Left cardiac atrium (tissue), 4 donors: ENCODE measurements at regions of chr2 and their contacts with region 1.

Region 1: DNA sequence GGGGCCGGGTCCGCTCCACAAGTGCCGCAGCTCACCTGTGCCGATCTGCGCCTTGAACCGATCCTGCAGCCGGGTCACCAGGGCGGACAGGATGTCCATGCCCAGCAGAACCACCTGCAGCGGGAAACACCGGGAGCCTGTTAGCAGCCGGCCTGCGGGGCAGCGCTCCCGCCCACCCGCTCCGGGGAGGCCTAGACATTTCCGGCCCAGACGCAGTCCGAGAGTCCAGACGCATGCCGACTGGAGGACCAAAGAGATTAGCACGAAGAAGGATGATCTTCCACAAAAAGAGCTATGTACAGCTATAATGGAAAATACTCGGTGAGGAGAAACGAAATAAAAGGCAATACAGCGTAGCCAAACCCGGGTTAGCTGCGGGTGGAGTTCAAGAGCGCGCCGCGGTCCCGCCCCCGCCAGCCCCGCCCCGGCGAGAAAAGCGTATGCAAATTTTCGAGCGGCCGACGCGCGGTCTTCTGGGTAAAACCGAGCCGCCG is 421 bp upstream of the RNU4ATAC start:
- DNase-seq: peak; percentile 87
- ATAC-seq: peak; percentile 81 to 85

Region 2: DNA sequence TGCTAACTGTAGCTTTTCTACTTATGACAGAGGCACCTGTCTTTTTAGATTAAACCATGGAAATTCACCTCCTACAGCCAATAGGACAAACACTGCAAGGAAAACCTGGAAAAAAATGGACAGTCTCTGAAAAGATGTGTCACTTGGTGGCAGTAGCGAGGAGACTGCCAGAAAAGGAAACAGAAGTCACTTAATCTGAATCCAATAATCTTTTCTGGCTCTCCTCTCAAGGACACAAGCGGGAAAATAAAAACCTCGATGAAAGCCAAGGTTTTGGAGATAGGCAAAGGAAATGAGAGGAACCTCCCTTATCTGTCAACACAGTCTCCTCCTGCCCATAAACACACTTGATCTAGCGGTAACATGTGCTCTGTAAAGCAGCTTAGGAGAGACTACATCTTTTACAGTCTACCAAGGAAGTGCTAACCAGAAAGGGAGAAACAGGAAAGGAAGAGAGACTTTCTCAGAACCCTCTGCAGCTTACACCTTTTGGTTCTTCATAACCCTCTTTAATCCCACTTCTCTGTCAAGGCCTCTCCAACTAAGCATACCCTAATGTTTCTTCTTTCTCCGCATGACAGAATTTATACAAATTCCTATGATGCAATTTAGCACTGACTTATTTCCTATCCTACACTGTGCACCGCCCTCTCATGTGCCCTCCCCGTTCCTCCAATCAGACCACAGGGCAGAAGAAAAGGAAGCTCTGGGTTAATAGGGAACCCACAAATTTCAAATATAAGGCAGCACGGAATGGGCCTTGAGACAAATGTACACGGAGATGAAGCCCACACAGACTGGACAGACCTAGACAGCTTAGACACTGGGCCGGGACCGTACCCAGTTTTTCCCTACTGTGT is 66.2 kb after region 1 on chr2:
- intact Hi-C with region 1: loop called in 1 of 2 experiments (anchors 10 kb)
- DNase-seq: peak; percentile 28
- ATAC-seq: peak; percentile 79 to 85

Region 3: GRCh38 chr2:121649596-121650314 is 119.5 kb after region 1 on chr2:
- intact Hi-C with region 1: loop called in 1 of 2 experiments (anchors 5 kb)
- DNase-seq: peak; percentile 98
- ATAC-seq: peak; percentile 98 to 99

Region 4: GRCh38 chr2:121665504-121665903 is 135.2 kb after region 1 on chr2:
- intact Hi-C with region 1: loop called in 1 of 2 experiments (anchors 10 kb)
- DNase-seq: no peak
- ATAC-seq: peak in 1 of 2 donors; percentile 51

Region 5: GRCh38 chr2:121699421-121700333 is 169.4 kb after region 1 on chr2:
- intact Hi-C with region 1: loop called in 1 of 2 experiments (anchors 5 kb)
- DNase-seq: no peak
- ATAC-seq: peak; percentile 77 to 83

Region 6: DNA sequence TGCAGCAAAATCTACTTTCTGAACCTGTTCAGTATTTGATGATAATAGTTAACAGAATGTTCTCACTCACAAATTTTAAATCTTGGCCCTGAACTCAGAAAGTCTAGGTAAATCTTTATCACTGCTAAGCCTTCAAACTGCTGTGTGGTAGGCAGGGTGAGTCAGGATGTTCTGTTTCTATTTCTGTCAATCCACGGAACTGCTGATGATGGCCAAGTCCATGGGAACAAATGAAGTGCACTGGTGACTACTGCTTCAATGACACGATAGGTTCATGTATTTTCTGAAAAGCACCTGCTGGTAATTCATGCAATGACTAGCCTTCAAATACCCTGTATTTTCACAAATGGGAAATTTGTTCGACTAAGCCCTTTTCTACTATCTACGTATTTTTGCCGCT is 192.2 kb after region 1 on chr2:
- intact Hi-C with region 1: loop called in 1 of 2 experiments (anchors 5 kb)
- DNase-seq: no peak
- ATAC-seq: peak in 1 of 2 donors; percentile 87